ENCODE measurements at regions of chr7 and their contacts with region 1.

Region 1: DNA sequence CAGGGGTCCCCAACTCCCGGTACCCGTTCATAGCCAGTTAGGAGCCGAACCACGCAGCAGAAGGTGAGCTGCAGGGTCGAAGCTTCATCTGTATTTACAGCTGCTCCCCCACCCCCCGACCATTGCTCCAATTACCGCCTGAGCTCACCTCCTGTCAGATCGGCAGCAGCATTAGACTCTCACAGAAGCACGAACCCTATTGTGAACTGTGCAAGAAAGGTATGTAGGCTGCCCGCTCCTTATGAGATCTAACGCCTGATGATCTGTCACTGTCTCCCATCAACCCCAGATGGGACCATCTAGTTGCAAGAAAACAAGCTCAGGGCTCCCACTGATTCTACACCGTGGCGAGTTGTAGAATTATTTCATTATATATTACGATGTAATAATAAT is 14.6 kb upstream of the AZGP1 start:
- DNase-seq: no peak
- H3K4me3 Mint-ChIP-seq: no peak overlapping the region
- H3K27ac Mint-ChIP-seq: no peak overlapping the region
- H3K4me1 Mint-ChIP-seq: peaks cover 22% of the 10 kb centered on the region
- H3K27me3 Mint-ChIP-seq: peaks cover 8% of the 10 kb centered on the region

Region 2: GRCh38 chr7:99918959-99919813 is 71.3 kb before region 1 on chr7 and contains the start of gene TRIM4:
- CTCF ChIA-PET with region 1: interaction called, 19 read pairs
- POLR2A ChIA-PET with region 1: no interaction called
- DNase-seq: peak; percentile 93
- H3K4me3 Mint-ChIP-seq: peak within 1 kb of the TSS; percentile 89
- H3K27ac Mint-ChIP-seq: peak within 1 kb of the TSS; percentile 95
- H3K4me1 Mint-ChIP-seq: peaks cover 49% of the 10 kb centered on the region
- H3K27me3 Mint-ChIP-seq: no peaks in the 10 kb centered on the region
- total RNA-seq, gene TRIM4: 33.3 to 33.5 TPM

Region 3: DNA sequence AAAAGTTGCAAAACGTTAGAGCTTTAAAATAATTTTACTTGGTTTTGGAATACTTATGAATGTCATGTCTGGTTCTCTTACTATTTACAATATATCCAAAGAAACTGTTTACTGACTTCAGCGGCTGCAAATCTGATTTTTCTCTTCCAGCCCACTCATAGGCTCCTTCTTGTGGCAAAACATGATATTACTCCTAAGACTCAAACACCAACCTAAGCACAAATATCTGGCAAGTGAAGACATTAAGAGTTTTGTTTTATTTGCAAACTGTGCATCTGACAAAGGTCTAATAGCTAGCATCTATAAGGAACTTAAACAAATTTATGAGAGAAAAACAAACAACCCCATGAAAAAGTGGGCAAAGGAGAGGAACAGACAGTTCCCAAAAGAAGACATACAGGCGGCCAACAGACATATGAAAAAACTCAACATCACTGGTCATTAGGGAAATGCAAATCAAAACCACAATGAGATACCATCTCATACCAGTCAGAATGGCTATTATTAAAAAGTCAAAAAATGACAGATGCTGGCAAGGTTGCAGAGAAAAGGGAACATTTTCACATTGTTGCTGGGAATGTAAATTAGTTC is 40.7 kb before region 1 on chr7:
- CTCF ChIA-PET with region 1: no interaction called
- POLR2A ChIA-PET with region 1: no interaction called
- DNase-seq: no peak
- H3K4me3 Mint-ChIP-seq: no peak overlapping the region
- H3K27ac Mint-ChIP-seq: no peak overlapping the region
- H3K4me1 Mint-ChIP-seq: no peaks in the 10 kb centered on the region
- H3K27me3 Mint-ChIP-seq: peaks cover 3% of the 10 kb centered on the region

Region 4: DNA sequence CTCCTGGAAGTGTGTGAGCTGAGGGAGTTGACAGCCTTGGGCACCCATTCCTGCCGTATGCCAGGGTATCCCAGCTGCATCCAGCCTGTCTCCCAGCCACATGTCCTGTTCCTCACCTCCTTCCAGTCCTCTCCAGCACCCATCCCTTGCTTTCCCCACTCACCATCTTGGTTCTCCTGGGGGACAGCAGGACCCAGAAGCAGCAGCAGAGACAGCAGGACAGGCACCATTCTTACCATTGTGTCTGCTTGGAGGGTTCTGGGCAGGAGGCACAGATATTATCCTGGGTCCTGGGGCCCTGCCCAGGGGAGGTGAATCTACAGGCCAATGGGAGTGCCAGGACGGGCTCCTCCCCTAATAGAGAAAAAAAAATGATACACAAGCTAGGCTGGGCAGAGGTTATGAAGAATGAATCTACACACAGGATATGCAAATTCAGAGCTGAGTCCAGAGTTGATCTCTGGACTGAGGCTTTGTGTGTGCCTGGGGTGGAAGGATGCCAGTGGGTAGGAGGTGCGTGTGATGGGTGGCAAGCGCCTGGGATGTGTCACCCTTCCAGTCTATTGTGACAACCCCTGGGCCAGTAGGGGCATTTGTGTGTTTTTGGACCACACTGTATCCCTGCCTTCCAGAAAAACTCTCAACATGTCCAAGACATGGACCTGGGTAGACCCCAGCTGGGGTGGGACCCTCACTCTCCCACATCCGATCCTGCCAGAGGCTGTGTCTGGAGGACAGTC is 14.5 kb before region 1 on chr7 and contains the start of gene AZGP1:
- CTCF ChIA-PET with region 1: interaction called, 13 read pairs
- POLR2A ChIA-PET with region 1: no interaction called
- DNase-seq: no peak
- H3K4me3 Mint-ChIP-seq: no peak within 1 kb of the TSS
- H3K27ac Mint-ChIP-seq: no peak within 1 kb of the TSS
- H3K4me1 Mint-ChIP-seq: peaks cover 11% of the 10 kb centered on the region
- H3K27me3 Mint-ChIP-seq: peaks cover 8% of the 10 kb centered on the region
- total RNA-seq, gene AZGP1: not detected